Activated naive CD4-positive, alpha-beta T cell treated with anti-CD3 and anti-CD28 coated beads for 36 hours (primary cell): ENCODE measurements at regions of chr12 and their contacts with region 1.

Region 1: GRCh38 chr12:130281153-130281799 is 56.4 kb upstream of the PIWIL1 start:
- DNase-seq: peak; percentile 57
- H3K4me3 Mint-ChIP-seq: no peak overlapping the region
- H3K27ac Mint-ChIP-seq: no peak overlapping the region
- H3K4me1 Mint-ChIP-seq: peaks cover 4% of the 10 kb centered on the region
- H3K27me3 Mint-ChIP-seq: peaks cover 17% of the 10 kb centered on the region

Region 2: DNA sequence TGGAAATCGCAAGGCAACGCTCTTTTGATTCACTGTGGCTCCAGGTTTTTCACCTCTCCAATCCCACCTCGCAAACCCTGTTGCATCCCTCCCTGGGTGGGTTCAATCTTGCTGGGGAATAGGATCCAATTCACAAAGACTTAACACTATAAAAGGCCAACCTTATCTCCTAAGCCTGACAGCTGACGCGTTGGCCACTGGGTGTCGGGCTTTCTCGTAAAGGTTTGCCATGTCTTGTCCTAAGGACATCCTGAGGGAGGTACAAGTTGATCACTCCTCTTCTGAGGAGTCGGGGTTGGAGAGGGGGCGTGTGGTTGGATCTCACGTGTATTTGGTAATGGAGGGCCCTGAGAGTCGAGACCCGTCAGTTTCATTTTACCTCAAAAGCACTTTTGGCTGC is 231.6 kb before region 1 on chr12:
- CTCF ChIA-PET with region 1: interaction called, 9 read pairs
- intact Hi-C with region 1: loop called (anchors 2 kb)
- DNase-seq: no peak
- H3K4me3 Mint-ChIP-seq: no peak overlapping the region
- H3K27ac Mint-ChIP-seq: no peak overlapping the region
- H3K4me1 Mint-ChIP-seq: peaks cover 12% of the 10 kb centered on the region
- H3K27me3 Mint-ChIP-seq: peaks cover 33% of the 10 kb centered on the region

Region 3: GRCh38 chr12:130747867-130748740 is 466.8 kb after region 1 on chr12:
- CTCF ChIA-PET with region 1: interaction called, 8 read pairs
- intact Hi-C with region 1: loop called (anchors 1 kb)
- DNase-seq: peak; percentile 87
- H3K4me3 Mint-ChIP-seq: no peak overlapping the region
- H3K27ac Mint-ChIP-seq: no peak overlapping the region
- H3K4me1 Mint-ChIP-seq: peaks cover 6% of the 10 kb centered on the region
- H3K27me3 Mint-ChIP-seq: peaks cover 7% of the 10 kb centered on the region

Region 4: GRCh38 chr12:132065609-132066344 is 1784.5 kb after region 1 on chr12:
- CTCF ChIA-PET with region 1: no interaction called
- intact Hi-C with region 1: no loop called
- DNase-seq: no peak
- H3K4me3 Mint-ChIP-seq: peak overlapping the region; percentile 20
- H3K27ac Mint-ChIP-seq: peak overlapping the region; percentile 70
- H3K4me1 Mint-ChIP-seq: peaks cover 18% of the 10 kb centered on the region
- H3K27me3 Mint-ChIP-seq: no peaks in the 10 kb centered on the region